ENCODE measurements at regions of chr9 and their contacts with region 1.

Region 1: GRCh38 chr9:97703437-97704344 is 6.6 kb upstream of the XPA start:
- ATAC-seq: peak in 7 of 8 experiments; percentile 80 to 94 (median 92)
- H3K4me3 ChIP-seq: no peak overlapping the region
- H3K27ac ChIP-seq: no peak overlapping the region
- H3K4me1 ChIP-seq: peaks cover 0 to 5% of the 10 kb centered on the region in 2 donors

Region 2: DNA sequence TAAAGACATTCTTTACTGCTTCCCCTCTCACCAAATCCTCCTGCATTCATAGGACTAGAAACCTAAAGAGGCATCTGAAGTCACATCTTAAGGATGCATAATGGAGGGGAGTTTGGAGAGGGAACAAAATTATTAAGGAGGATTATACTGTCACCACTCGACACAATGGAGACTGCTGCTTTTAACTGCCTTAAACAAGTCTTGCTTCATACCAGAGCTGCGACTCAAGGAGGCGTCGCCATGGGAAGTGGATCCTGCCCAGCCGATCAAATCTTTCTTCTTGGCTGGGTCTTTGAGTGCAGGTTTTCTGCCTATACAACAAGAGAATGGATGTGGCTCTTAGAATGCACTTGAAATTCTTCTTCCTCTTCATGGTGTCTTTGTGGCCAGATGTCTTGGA is 82.7 kb after region 1 on chr9:
- in situ Hi-C with region 1: no loop called
- ATAC-seq: peak in 2 of 8 experiments; percentile 54 to 55
- H3K4me3 ChIP-seq: no peak overlapping the region
- H3K27ac ChIP-seq: no peak overlapping the region
- H3K4me1 ChIP-seq: peaks cover 0 to 6% of the 10 kb centered on the region in 2 donors

Region 3: GRCh38 chr9:97890038-97890437 is 186.3 kb after region 1 on chr9:
- in situ Hi-C with region 1: loop called in 4 of 9 experiments (anchors 10 to 25 kb)
- ATAC-seq: peak in 3 of 8 experiments; percentile 66 to 80 (median 77)
- H3K4me3 ChIP-seq: no peak overlapping the region
- H3K27ac ChIP-seq: no peak overlapping the region
- H3K4me1 ChIP-seq: no peaks in the 10 kb centered on the region

Region 4: DNA sequence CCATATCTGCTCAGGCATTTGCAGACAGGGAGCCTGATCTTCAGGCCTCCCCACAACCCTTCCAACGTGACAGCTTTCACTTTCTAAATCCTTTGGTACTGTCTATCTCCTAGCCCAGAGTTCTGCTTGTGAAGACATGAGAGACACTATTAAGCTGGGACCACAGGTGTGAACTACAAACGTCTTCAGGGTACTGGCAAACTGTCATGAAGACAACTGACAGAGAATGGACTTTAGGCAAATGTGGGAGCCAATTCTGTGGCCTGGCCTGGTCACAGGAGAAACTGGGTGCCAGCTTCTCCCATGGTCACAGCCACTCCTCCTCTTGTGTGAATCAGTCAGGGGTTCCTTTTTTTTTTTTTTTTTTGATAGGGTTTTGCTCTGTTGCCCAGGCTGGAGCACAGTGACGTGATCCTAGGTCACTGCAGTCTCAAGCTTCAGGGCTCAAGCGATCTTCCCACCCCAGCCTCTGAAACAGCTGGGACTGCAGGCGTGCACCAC is 404.9 kb after region 1 on chr9:
- in situ Hi-C with region 1: no loop called
- ATAC-seq: no peak
- H3K4me3 ChIP-seq: no peak overlapping the region
- H3K27ac ChIP-seq: no peak overlapping the region
- H3K4me1 ChIP-seq: no peaks in the 10 kb centered on the region

Measured in motor neuron (in vitro differentiated cells).